CD4-positive, alpha-beta T cell (primary cell): ENCODE measurements at regions of chr7 and their contacts with region 1.

Region 1: DNA sequence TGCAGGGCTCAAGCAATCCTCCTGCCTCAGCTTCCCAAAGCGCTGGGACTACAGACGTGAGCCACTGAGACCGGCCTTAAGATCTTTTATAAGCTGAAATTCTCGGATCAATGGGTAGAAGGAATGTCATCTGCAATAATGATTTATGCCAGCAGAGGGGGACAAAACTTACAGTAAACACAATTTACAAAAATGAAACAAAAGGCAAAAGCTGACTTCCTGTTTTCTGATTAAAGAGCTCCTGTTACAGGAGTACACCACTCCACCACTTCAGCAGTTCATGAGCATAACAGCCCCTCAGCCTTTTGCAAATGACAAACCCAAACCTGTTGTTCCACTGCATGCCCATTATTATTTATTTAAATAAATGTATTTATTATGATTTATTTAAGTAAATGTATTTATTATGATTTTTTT is 88.5 kb upstream of the ATP6V0A4 start:
- DNase-seq: peak in 8 of 14 experiments; percentile 13 to 85 (median 52)
- ATAC-seq: peak; percentile 95
- H3K4me3 ChIP-seq: no peak overlapping the region
- H3K4me3 Mint-ChIP-seq: no peak overlapping the region
- H3K27ac ChIP-seq: no peak overlapping the region
- H3K27ac Mint-ChIP-seq: peak overlapping the region; percentile 2
- H3K4me1 ChIP-seq: peaks cover 16% of the 10 kb centered on the region
- H3K4me1 Mint-ChIP-seq: peaks cover 20% of the 10 kb centered on the region
- H3K27me3 ChIP-seq: no peaks in the 10 kb centered on the region
- H3K27me3 Mint-ChIP-seq: no peaks in the 10 kb centered on the region
- CTCF ChIP-seq: peak; percentile 75

Region 2: GRCh38 chr7:138875794-138876193 is 10.7 kb before region 1 on chr7:
- CTCF ChIA-PET with region 1: interaction called, 22 read pairs
- POLR2A ChIA-PET with region 1: interaction called, 3 read pairs
- intact Hi-C with region 1: no loop called
- DNase-seq: peak; percentile 19 to 83 (median 46)
- ATAC-seq: peak; percentile 96
- H3K4me3 ChIP-seq: no peak overlapping the region
- H3K4me3 Mint-ChIP-seq: no peak overlapping the region
- H3K27ac ChIP-seq: no peak overlapping the region
- H3K27ac Mint-ChIP-seq: peak overlapping the region; percentile 26
- H3K4me1 ChIP-seq: peaks cover 6% of the 10 kb centered on the region
- H3K4me1 Mint-ChIP-seq: peaks cover 15% of the 10 kb centered on the region
- H3K27me3 ChIP-seq: no peaks in the 10 kb centered on the region
- H3K27me3 Mint-ChIP-seq: no peaks in the 10 kb centered on the region
- CTCF ChIP-seq: no peak

Region 3: DNA sequence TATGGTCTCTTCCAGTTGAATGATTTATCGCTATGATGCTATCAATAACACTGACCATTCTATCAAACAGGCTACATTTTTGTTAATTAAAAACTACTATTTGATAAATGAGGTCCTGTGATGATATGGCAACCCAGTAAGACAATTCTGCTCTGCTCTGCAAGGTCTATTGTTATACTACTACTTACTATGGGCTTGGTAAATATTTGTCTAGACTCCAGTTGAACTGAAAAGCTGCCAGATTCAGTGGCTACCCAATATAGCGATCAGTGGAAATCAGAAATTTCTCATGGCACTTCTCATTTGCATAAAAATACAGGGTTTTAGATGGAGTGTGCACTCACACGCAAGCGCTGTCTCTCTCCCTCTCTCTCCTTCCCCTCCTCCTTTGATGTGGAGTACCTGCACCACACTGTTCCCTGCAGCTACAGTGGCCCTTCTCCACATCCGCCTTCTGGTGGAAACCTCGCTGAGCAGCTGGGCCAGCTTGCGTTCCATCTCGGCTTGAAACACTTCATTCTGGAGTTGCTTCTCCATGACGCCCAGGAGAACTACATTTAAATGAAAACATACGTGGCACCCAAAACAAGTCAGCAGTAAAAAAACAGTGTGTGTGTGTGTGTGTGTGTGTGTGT is 16.8 kb after region 1 on chr7:
- CTCF ChIA-PET with region 1: interaction called, 29 read pairs
- POLR2A ChIA-PET with region 1: interaction called, 19 read pairs
- intact Hi-C with region 1: loop called in 1 of 2 experiments (anchors 1 kb)
- DNase-seq: peak; percentile 58 to 93 (median 68)
- ATAC-seq: peak; percentile 95
- H3K4me3 ChIP-seq: peak overlapping the region; percentile 13
- H3K4me3 Mint-ChIP-seq: peak overlapping the region; percentile 85
- H3K27ac ChIP-seq: no peak overlapping the region
- H3K27ac Mint-ChIP-seq: peak overlapping the region; percentile 70
- H3K4me1 ChIP-seq: peaks cover 24% of the 10 kb centered on the region
- H3K4me1 Mint-ChIP-seq: peaks cover 47% of the 10 kb centered on the region
- H3K27me3 ChIP-seq: no peaks in the 10 kb centered on the region
- H3K27me3 Mint-ChIP-seq: peaks cover 21% of the 10 kb centered on the region
- CTCF ChIP-seq: no peak

Region 4: GRCh38 chr7:139016931-139017511 is 130.5 kb after region 1 on chr7:
- CTCF ChIA-PET with region 1: interaction called, 5 read pairs
- POLR2A ChIA-PET with region 1: interaction called, 6 read pairs
- intact Hi-C with region 1: loop called in 1 of 2 experiments (anchors 10 kb)
- DNase-seq: peak; percentile 26 to 80 (median 52)
- ATAC-seq: peak; percentile 95
- H3K4me3 ChIP-seq: no peak overlapping the region
- H3K4me3 Mint-ChIP-seq: no peak overlapping the region
- H3K27ac ChIP-seq: no peak overlapping the region
- H3K27ac Mint-ChIP-seq: no peak overlapping the region
- H3K4me1 ChIP-seq: peaks cover 5% of the 10 kb centered on the region
- H3K4me1 Mint-ChIP-seq: peaks cover 7% of the 10 kb centered on the region
- H3K27me3 ChIP-seq: no peaks in the 10 kb centered on the region
- H3K27me3 Mint-ChIP-seq: peaks cover 4% of the 10 kb centered on the region
- CTCF ChIP-seq: peak; percentile 76

Region 5: DNA sequence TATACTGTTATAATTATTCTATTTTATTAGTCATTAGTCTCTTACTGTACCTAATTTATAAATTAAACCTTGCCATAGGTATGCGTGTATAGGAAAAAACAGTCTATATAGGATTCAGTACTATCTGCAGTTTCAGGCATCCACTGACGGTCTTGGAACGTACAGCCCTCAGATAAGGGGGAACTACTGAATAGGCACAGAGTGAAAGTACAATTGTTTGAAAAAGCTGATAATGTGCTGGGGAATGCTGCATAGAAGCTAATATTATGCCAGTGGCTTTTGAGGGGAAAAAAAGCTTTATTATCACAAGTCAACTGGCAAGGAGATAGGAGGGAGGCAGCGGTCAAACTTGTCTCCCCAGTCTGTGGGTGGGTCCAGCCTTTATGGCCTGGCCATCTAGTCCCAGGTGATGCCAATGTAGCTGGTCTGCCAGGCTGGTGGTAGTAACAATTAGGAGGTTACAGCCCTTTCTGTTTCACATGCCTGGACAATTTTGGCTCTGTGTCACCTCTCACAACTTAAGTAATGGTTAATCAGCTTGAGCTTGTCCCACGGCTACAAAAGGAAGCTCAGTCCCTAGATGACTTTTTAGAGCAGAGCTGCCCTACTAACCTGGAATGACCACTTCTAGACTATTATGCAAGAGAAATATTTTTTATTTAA is 446.3 kb after region 1 on chr7:
- CTCF ChIA-PET with region 1: no interaction called
- POLR2A ChIA-PET with region 1: no interaction called
- intact Hi-C with region 1: loop called in 1 of 2 experiments (anchors 10 kb)
- DNase-seq: no peak
- ATAC-seq: no peak
- H3K4me3 ChIP-seq: no peak overlapping the region
- H3K4me3 Mint-ChIP-seq: no peak overlapping the region
- H3K27ac ChIP-seq: no peak overlapping the region
- H3K27ac Mint-ChIP-seq: no peak overlapping the region
- H3K4me1 ChIP-seq: no peaks in the 10 kb centered on the region
- H3K4me1 Mint-ChIP-seq: peaks cover 16% of the 10 kb centered on the region
- H3K27me3 ChIP-seq: no peaks in the 10 kb centered on the region
- H3K27me3 Mint-ChIP-seq: no peaks in the 10 kb centered on the region
- CTCF ChIP-seq: no peak